Dorsolateral prefrontal cortex (tissue), 120 donors: ENCODE measurements at regions of chr6 and their contacts with region 1.

Region 1: GRCh38 chr6:16770701-16771569 is 9.7 kb upstream of the ATXN1 start:
- DNase-seq: peak; percentile 55 to 82 (median 64)
- H3K4me3 ChIP-seq: peak overlapping the region in 5 of 59 donors; percentile 0 to 41 (median 3)
- H3K27ac ChIP-seq: peak overlapping the region in 25 of 59 donors; percentile 2 to 69 (median 27)
- H3K27me3 ChIP-seq: no peaks in the 10 kb centered on the region
- CTCF ChIP-seq: peak; percentile 35 to 95 (median 87)

Region 2: DNA sequence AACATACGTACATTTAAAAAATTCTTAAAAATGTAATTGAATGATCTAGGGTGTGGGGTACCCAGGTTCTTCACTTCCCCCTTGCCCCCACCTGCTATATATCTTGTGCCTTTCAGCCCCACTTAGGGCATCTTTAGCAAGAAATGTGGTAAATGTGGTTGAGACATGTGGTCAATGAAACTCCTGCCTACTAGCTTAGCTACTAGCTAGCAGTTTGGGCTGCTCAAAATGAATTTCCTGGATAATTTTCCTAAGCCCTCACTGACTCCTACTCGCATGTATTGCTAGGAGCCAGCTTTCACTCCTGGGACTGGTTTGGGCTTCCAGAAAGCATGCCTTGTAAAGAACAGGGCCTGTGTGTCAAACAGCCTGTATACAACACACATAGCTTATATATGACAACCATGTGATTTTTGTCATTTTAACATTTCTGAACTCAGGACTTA is 266.9 kb before region 1 on chr6:
- intact Hi-C with region 1: no loop called
- DNase-seq: no peak
- H3K4me3 ChIP-seq: no peak overlapping the region
- H3K27ac ChIP-seq: no peak overlapping the region
- H3K27me3 ChIP-seq: no peaks in the 10 kb centered on the region
- CTCF ChIP-seq: no peak

Region 3: DNA sequence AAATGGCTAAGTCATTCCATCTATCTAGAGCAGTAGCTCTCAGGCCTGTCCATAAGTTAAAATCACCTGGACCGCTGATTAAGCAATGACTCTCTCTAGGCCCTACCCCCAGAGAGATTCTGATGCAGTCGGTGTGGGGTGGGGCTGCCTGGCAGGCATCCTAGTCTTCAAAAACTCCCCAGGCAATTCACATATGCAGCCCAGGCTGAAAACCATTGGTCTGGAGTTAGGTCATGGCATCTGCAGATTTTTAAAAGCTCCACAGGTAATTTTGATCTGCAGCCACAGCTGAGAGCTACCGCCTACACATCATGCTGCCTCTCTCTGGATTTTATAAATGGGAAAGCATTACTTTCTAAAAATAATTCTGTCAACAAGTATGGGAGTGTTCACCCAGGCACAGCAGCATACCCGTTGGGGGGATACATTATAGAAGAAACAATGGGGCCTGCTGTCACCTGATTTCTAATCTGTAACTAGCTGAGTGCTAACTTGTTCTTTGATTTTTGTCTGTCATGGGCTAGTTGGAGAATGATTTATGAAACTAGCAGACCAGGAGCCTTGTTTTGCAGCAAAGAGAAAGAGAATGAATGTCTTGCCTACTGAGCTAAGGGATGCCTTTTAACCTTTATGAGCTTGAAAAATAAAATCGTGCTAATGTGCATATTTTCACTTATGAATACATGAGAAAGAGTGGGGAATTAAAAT is 34.5 kb after region 1 on chr6:
- intact Hi-C with region 1: loop called in 1 of 2 experiments (anchors 5 kb)
- DNase-seq: no peak
- H3K4me3 ChIP-seq: peak overlapping the region in 7 of 59 donors; percentile 6 to 67 (median 60)
- H3K27ac ChIP-seq: peak overlapping the region in 57 of 59 donors; percentile 21 to 90 (median 78)
- H3K27me3 ChIP-seq: no peaks in the 10 kb centered on the region
- CTCF ChIP-seq: no peak

Region 4: GRCh38 chr6:16964553-16965501 is 193.9 kb after region 1 on chr6:
- intact Hi-C with region 1: loop called (anchors 5 kb)
- DNase-seq: peak; percentile 64 to 86 (median 76)
- H3K4me3 ChIP-seq: peak overlapping the region in 55 of 59 donors; percentile 2 to 63 (median 40)
- H3K27ac ChIP-seq: peak overlapping the region in 10 of 59 donors; percentile 7 to 84 (median 28)
- H3K27me3 ChIP-seq: peaks cover 0 to 4% (median 0%) of the 10 kb centered on the region in 45 donors
- CTCF ChIP-seq: peak; percentile 57 to 95 (median 91)

Region 5: DNA sequence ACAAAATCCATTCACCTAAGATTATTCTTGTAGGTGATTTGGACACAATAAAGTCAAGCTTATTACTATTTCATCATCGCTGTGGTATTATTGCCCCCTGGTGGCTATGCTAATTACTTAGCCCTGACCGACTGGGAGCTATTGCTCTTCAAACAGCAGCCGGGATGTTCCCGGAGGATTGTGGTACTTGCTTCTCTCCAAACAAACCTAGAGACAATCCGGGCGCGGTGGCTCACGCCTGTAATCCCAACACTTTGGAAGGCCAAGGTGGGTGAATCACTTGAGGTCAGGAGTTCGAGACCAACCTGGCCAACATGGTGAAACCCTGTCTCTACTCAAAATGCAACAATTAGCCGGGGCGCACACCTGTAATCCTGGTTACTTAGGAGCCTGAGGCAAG is 315.5 kb after region 1 on chr6:
- intact Hi-C with region 1: loop called (anchors 5 to 10 kb)
- DNase-seq: peak in 7 of 10 donors; percentile 16 to 81 (median 56)
- H3K4me3 ChIP-seq: no peak overlapping the region
- H3K27ac ChIP-seq: no peak overlapping the region
- H3K27me3 ChIP-seq: no peaks in the 10 kb centered on the region
- CTCF ChIP-seq: peak; percentile 58 to 90 (median 80)

Region 6: DNA sequence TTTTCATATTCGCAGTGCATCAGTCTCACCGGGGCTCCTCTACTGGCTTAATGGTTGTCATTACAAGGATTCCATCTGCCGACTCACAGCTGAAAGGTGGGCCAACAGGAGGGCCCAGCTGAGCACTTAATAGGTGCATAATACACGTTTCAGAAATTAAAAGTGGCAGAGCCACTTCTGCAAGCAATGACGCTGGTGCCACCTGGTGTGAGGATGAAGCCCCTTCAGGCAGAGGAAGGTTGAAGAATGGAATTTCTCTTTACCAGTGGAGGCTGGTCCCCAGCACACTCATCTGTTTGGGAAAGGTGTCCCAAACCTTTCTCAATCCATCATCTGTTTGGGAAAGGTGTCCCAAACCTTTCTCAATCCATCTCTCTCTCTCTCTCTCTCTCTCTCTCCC is 322.8 kb after region 1 on chr6:
- intact Hi-C with region 1: loop called (anchors 5 to 10 kb)
- DNase-seq: no peak
- H3K4me3 ChIP-seq: peak overlapping the region in 5 of 59 donors; percentile 1 to 21 (median 9)
- H3K27ac ChIP-seq: peak overlapping the region in 31 of 59 donors; percentile 0 to 73 (median 48)
- H3K27me3 ChIP-seq: no peaks in the 10 kb centered on the region
- CTCF ChIP-seq: peak in 32 of 56 donors; percentile 9 to 42 (median 28)